Transverse colon (tissue), 4 donors: ENCODE measurements at regions of chr10 and their contacts with region 1.

Region 1: GRCh38 chr10:82340166-82340565 is 465.2 kb downstream of the NRG3 start:
- DNase-seq: no peak
- H3K4me3 ChIP-seq: no peak overlapping the region
- H3K27ac ChIP-seq: no peak overlapping the region
- H3K4me1 ChIP-seq: no peaks in the 10 kb centered on the region
- H3K27me3 ChIP-seq: no peaks in the 10 kb centered on the region
- CTCF ChIP-seq: no peak
- EP300 ChIP-seq: no peak
- POLR2A ChIP-seq: no peak

Region 2: GRCh38 chr10:82267465-82267864 is 72.7 kb before region 1 on chr10:
- in situ Hi-C with region 1: no loop called
- intact Hi-C with region 1: loop called (anchors 2 kb)
- DNase-seq: no peak
- H3K4me3 ChIP-seq: no peak overlapping the region
- H3K27ac ChIP-seq: no peak overlapping the region
- H3K4me1 ChIP-seq: no peaks in the 10 kb centered on the region
- H3K27me3 ChIP-seq: no peaks in the 10 kb centered on the region
- CTCF ChIP-seq: no peak
- EP300 ChIP-seq: no peak
- POLR2A ChIP-seq: no peak

Region 3: GRCh38 chr10:82438277-82438676 is 98.1 kb after region 1 on chr10:
- in situ Hi-C with region 1: no loop called
- intact Hi-C with region 1: no loop called
- DNase-seq: no peak
- H3K4me3 ChIP-seq: no peak overlapping the region
- H3K27ac ChIP-seq: no peak overlapping the region
- H3K4me1 ChIP-seq: no peaks in the 10 kb centered on the region
- H3K27me3 ChIP-seq: no peaks in the 10 kb centered on the region
- CTCF ChIP-seq: no peak
- EP300 ChIP-seq: no peak
- POLR2A ChIP-seq: no peak